SK-N-SH (cell line): ENCODE measurements at regions of chr1 and their contacts with region 1.

Region 1: GRCh38 chr1:202599677-202600431 is 110.4 kb downstream of the SYT2 start:
- DNase-seq: peak; percentile 80
- H3K4me3 ChIP-seq: no peak overlapping the region
- H3K27ac ChIP-seq: peak overlapping the region; percentile 24 to 48; a peak in 2 of 4 replicates
- H3K4me1 ChIP-seq: peaks cover 0 to 7% of the 10 kb centered on the region in 2 experiments; a peak in 1 of 4 replicates
- H3K27me3 ChIP-seq: no peaks in the 10 kb centered on the region
- CTCF ChIP-seq: peak; percentile 90
- EP300 ChIP-seq: no peak
- RAD21 ChIP-seq: peak; percentile 96

Region 2: GRCh38 chr1:202501281-202501680 is 98.6 kb before region 1 on chr1:
- CTCF ChIA-PET with region 1: interaction called, 31 read pairs
- POLR2A ChIA-PET with region 1: no interaction called
- DNase-seq: peak; percentile 7
- H3K4me3 ChIP-seq: no peak overlapping the region
- H3K27ac ChIP-seq: no peak overlapping the region
- H3K4me1 ChIP-seq: peaks cover 8 to 16% of the 10 kb centered on the region in 2 experiments
- H3K27me3 ChIP-seq: no peaks in the 10 kb centered on the region
- CTCF ChIP-seq: peak; percentile 63
- EP300 ChIP-seq: no peak
- RAD21 ChIP-seq: peak; percentile 82

Region 3: GRCh38 chr1:202571347-202572339 is 28.2 kb before region 1 on chr1:
- CTCF ChIA-PET with region 1: interaction called, 48 read pairs
- POLR2A ChIA-PET with region 1: no interaction called
- DNase-seq: no peak
- H3K4me3 ChIP-seq: no peak overlapping the region
- H3K27ac ChIP-seq: peak overlapping the region in 1 of 2 experiments; percentile 36; a peak in 1 of 4 replicates
- H3K4me1 ChIP-seq: peaks cover 46 to 56% of the 10 kb centered on the region in 2 experiments
- H3K27me3 ChIP-seq: no peaks in the 10 kb centered on the region
- CTCF ChIP-seq: peak; percentile 93
- EP300 ChIP-seq: no peak
- RAD21 ChIP-seq: peak; percentile 87

Region 4: DNA sequence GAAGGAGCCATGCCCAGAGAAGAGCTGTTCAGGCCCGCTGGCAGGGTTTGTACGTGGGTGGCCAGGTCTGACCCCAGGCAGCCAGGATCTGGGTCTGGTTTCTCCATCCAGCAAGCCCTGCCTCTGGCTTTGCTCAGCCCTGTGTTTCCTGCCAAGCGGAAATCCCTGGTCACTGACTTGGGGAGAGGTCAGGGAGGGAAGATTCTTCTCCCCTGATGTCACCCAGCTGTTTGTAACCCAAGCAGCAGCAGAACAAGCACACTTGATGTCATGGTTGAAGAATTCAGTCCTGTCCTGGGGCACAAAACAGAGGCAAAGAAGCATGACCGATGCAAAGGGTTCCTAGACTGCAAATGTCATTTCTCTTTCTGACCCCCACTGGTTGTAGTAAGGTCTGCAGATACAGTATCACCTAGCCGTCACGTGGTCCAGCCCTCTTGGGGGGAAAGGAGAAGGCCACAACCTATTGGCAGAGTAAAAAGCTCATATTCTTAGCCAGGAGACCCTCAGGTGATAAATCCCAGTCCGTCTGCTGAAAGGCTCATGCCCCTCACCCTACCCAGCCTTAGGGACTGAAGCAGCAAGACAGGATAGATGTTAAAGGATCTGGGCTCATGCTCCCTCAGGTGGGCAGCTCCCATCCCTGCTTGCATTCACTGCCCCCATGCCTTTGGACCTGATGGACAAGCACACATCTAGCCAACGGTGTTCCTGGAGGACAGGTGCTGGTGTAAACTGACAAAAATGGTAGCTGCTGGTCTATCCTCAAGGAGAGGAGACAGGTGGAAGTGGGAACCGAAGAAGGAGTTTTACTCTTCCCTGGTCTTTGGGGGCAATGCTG is 10.4 kb before region 1 on chr1:
- CTCF ChIA-PET with region 1: interaction called, 57 read pairs
- POLR2A ChIA-PET with region 1: no interaction called
- DNase-seq: peak; percentile 45
- H3K4me3 ChIP-seq: no peak overlapping the region
- H3K27ac ChIP-seq: peak overlapping the region; percentile 82 to 95
- H3K4me1 ChIP-seq: peaks cover 33 to 60% of the 10 kb centered on the region in 2 experiments
- H3K27me3 ChIP-seq: no peaks in the 10 kb centered on the region
- CTCF ChIP-seq: peak; percentile 25
- EP300 ChIP-seq: peak; percentile 66 to 98; a peak in 3 of 4 replicates
- RAD21 ChIP-seq: no peak